ENCODE measurements at regions of chr1 and their contacts with region 1.

Region 1: DNA sequence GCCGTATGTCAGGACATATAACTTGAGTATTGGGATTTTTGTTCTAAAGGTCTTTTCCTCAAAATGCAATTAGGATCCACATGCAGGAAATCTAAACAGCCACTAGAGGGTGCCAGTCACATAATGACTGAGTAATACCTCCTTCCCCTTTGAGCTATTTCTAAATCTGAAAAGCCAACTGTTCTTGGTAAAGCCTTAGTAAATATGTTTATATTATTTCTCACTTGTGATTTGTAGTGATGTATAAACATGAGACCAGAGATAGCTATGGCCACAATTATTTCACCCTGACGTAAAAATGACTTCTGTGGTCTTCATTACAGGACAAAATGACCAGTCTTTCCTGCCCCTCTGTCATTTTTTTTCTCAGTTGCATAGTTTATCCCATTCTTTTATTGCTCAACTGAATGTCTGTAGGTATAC is 41.0 kb upstream of the DR1 start:
- DNase-seq: peak; percentile 43 to 52
- H3K4me3 ChIP-seq: no peak overlapping the region
- H3K4me3 Mint-ChIP-seq: no peak overlapping the region
- H3K27ac Mint-ChIP-seq: no peak overlapping the region
- H3K4me1 ChIP-seq: no peaks in the 10 kb centered on the region
- H3K4me1 Mint-ChIP-seq: peaks cover 6% of the 10 kb centered on the region
- H3K27me3 ChIP-seq: no peaks in the 10 kb centered on the region
- H3K27me3 Mint-ChIP-seq: peaks cover 4% of the 10 kb centered on the region
- CTCF ChIP-seq: peak; percentile 47 to 58

Region 2: DNA sequence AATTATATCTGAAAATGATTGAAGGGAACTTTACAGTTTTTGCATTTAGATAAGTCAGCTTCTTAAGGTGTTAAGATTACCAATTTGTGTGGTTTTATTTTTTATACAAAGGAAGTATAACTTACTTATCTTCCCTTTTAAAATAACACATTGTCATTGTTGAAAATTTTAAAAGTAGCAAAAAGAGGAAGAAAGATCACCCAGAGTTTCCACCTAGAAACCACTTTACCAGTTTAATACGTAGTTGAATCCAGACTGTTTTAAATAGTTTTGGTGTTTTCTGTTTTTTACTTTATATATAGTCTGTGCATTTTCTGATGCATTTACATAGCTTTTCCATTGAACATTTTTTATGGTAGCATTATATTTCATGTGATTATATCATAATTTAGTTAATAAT is 118.1 kb before region 1 on chr1:
- CTCF ChIA-PET with region 1: no interaction called
- POLR2A ChIA-PET with region 1: no interaction called
- intact Hi-C with region 1: no loop called
- DNase-seq: no peak
- H3K4me3 ChIP-seq: no peak overlapping the region
- H3K4me3 Mint-ChIP-seq: no peak overlapping the region
- H3K27ac Mint-ChIP-seq: no peak overlapping the region
- H3K4me1 ChIP-seq: no peaks in the 10 kb centered on the region
- H3K4me1 Mint-ChIP-seq: no peaks in the 10 kb centered on the region
- H3K27me3 ChIP-seq: no peaks in the 10 kb centered on the region
- H3K27me3 Mint-ChIP-seq: no peaks in the 10 kb centered on the region
- CTCF ChIP-seq: no peak

Region 3: DNA sequence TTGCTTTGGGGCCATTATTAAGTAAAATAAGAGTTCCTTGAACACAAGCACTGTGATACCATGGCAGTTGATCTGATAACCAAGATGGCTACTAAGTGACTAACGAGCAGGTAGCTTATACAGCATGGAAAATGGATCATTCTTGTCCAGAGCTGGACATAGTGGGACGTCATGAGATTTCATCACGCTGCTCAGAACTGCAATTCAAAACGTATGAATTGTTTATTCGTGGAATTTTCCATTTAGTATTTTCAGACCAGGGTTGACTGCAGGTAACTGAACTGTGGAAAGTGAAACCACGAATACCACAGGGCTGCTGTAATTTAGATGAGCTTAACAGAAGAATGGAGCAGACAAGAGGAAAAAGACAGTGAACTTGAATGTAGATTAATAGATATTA is 85.3 kb before region 1 on chr1:
- CTCF ChIA-PET with region 1: no interaction called
- POLR2A ChIA-PET with region 1: no interaction called
- intact Hi-C with region 1: no loop called
- DNase-seq: no peak
- H3K4me3 ChIP-seq: no peak overlapping the region
- H3K4me3 Mint-ChIP-seq: no peak overlapping the region
- H3K27ac Mint-ChIP-seq: no peak overlapping the region
- H3K4me1 ChIP-seq: no peaks in the 10 kb centered on the region
- H3K4me1 Mint-ChIP-seq: no peaks in the 10 kb centered on the region
- H3K27me3 ChIP-seq: no peaks in the 10 kb centered on the region
- H3K27me3 Mint-ChIP-seq: no peaks in the 10 kb centered on the region
- CTCF ChIP-seq: no peak

Region 4: GRCh38 chr1:93345633-93346420 is 41.1 kb after region 1 on chr1 and contains the start of gene DR1:
- CTCF ChIA-PET with region 1: interaction called, 13 read pairs
- POLR2A ChIA-PET with region 1: interaction called, 8 read pairs
- intact Hi-C with region 1: loop called (anchors 1 kb)
- DNase-seq: peak; percentile 92 to 93
- H3K4me3 ChIP-seq: peak within 1 kb of the TSS; percentile 64
- H3K4me3 Mint-ChIP-seq: peak within 1 kb of the TSS; percentile 94
- H3K27ac Mint-ChIP-seq: peak within 1 kb of the TSS; percentile 96
- H3K4me1 ChIP-seq: peaks cover 6% of the 10 kb centered on the region; the same call in 1 of the 2 replicates
- H3K4me1 Mint-ChIP-seq: no peaks in the 10 kb centered on the region
- H3K27me3 ChIP-seq: no peaks in the 10 kb centered on the region
- H3K27me3 Mint-ChIP-seq: no peaks in the 10 kb centered on the region
- CTCF ChIP-seq: no peak
- total RNA-seq, gene DR1: 29.9 and 30.5 TPM in 2 replicates

Region 5: GRCh38 chr1:93437976-93438605 is 133.4 kb after region 1 on chr1:
- CTCF ChIA-PET with region 1: no interaction called
- POLR2A ChIA-PET with region 1: no interaction called
- intact Hi-C with region 1: loop called (anchors 2 kb)
- DNase-seq: peak in 1 of 2 experiments; percentile 14
- H3K4me3 ChIP-seq: no peak overlapping the region
- H3K4me3 Mint-ChIP-seq: no peak overlapping the region
- H3K27ac Mint-ChIP-seq: no peak overlapping the region
- H3K4me1 ChIP-seq: peaks cover 5% of the 10 kb centered on the region; the same call in 1 of the 2 replicates
- H3K4me1 Mint-ChIP-seq: no peaks in the 10 kb centered on the region
- H3K27me3 ChIP-seq: no peaks in the 10 kb centered on the region
- H3K27me3 Mint-ChIP-seq: no peaks in the 10 kb centered on the region
- CTCF ChIP-seq: peak; percentile 24

Region 6: DNA sequence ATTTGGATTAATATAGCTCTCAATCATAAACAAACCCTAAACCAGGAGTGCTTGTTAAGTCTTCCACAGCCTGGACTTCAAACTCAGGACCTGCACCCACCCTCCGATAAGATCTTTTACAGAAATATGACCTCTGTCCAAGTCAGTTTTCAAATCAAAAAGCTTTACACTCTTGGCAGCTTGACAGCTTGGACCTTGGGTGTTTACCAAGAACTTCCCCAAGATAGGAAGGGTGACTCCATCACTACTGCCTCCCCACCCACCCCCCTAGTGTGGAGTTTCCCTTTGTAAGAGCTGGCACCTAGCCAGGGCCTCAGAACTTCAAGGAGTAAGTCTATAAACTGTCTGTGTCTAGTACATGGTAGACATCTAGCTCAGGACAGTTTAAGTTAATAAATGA is 367.3 kb after region 1 on chr1:
- CTCF ChIA-PET with region 1: no interaction called
- POLR2A ChIA-PET with region 1: no interaction called
- intact Hi-C with region 1: no loop called
- DNase-seq: peak in 1 of 2 experiments; percentile 48
- H3K4me3 ChIP-seq: no peak overlapping the region
- H3K4me3 Mint-ChIP-seq: no peak overlapping the region
- H3K27ac Mint-ChIP-seq: no peak overlapping the region
- H3K4me1 ChIP-seq: peaks cover 41% of the 10 kb centered on the region
- H3K4me1 Mint-ChIP-seq: peaks cover 15% of the 10 kb centered on the region
- H3K27me3 ChIP-seq: no peaks in the 10 kb centered on the region
- H3K27me3 Mint-ChIP-seq: no peaks in the 10 kb centered on the region
- CTCF ChIP-seq: no peak

Measured in Caco-2 (cell line).